MCF 10A (cell line): ENCODE measurements at regions of chr12 and their contacts with region 1.

Region 1: DNA sequence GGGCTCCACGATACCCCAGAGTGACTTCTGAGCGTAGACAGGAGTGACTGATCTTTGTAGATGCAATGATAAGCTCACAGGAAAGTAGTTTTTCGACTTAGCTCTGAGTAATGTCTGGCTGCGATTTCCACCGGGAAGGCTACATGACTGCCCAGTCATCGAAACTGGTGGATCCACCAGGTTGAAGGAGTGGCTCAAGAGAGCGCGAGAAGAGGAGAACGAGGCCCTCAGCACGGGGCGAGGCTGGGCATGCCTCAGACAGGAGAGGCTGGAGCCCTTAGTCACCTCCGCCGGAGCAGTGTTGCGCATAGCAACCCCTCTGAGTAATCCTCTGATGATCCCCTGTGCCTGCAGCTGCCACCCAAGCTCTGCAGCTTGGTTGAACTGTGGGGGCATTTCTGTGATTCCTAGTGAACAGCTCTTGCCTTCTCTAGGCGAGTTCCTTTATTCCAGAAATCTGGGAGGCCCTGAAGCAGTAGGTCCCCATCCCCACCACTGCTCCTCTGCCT is 25.6 kb downstream of the ELK3 start:
- DNase-seq: peak; percentile 99
- H3K4me3 Mint-ChIP-seq: peak overlapping the region; percentile 76
- H3K27ac Mint-ChIP-seq: peak overlapping the region; percentile 100
- H3K4me1 Mint-ChIP-seq: peaks cover 51% of the 10 kb centered on the region
- H3K27me3 Mint-ChIP-seq: no peaks in the 10 kb centered on the region
- CTCF ChIP-seq: no peak

Region 2: DNA sequence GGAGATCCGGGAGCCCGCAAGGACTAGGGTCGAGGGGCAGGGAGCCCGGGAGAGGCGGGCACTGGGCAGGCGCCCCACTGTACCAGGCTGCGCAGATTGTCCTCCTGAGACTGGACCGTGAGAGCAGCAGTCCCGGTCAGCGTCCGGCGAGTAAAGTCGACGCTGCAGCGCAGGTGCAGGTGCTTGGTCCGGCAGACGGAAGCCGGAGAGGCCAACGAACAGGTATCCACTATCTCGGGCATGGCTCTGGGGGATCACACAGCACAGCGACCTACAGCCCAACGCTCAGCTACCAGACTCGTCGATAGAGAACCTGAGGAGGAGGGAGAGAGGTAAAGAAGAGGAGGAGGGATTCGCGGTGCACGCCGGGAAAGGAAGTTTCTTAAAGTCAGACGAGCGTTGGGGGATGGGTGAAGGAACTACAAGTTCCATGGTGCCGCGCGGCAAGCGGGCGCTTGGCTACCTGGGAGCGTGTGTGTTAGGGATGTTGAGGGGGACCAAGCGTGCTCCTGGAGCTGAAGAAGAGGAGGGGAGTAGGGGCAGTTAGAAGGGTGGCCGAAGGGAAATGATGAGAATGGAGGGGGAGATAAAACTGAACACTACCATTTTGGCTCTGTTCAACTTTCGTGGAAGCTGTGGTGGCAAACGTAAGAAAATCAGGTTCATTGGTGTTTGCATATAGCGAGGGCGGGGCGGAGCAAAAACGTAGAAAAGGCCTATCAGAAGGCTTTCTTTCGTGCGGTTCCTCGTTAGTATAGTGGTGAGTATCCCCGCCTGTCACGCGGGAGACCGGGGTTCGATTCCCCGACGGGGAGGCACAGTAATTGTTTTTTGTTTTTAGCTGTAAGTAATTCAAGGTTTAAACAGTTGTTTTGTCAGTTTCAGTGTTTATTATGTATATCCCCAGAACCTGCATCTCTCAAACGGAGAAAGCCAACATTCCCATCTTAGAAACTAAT is 184.2 kb before region 1 on chr12 and contains the start of gene LTA4H:
- CTCF ChIA-PET with region 1: interaction called, 5 read pairs
- POLR2A ChIA-PET with region 1: interaction called, 15 read pairs
- intact Hi-C with region 1: no loop called
- DNase-seq: peak; percentile 99
- H3K4me3 Mint-ChIP-seq: no peak within 1 kb of the TSS
- H3K27ac Mint-ChIP-seq: no peak within 1 kb of the TSS
- H3K4me1 Mint-ChIP-seq: peaks cover 8% of the 10 kb centered on the region
- H3K27me3 Mint-ChIP-seq: no peaks in the 10 kb centered on the region
- CTCF ChIP-seq: no peak
- total RNA-seq, gene LTA4H: 52.3 and 66.0 TPM in 2 replicates

Region 3: GRCh38 chr12:96073346-96074330 is 146.1 kb before region 1 on chr12:
- CTCF ChIA-PET with region 1: interaction called, 11 read pairs
- POLR2A ChIA-PET with region 1: interaction called, 5 read pairs
- intact Hi-C with region 1: no loop called
- DNase-seq: peak; percentile 46
- H3K4me3 Mint-ChIP-seq: no peak overlapping the region
- H3K27ac Mint-ChIP-seq: peak overlapping the region; percentile 13
- H3K4me1 Mint-ChIP-seq: peaks cover 12% of the 10 kb centered on the region
- H3K27me3 Mint-ChIP-seq: no peaks in the 10 kb centered on the region
- CTCF ChIP-seq: no peak

Region 4: GRCh38 chr12:96208801-96209549 is 10.8 kb before region 1 on chr12:
- CTCF ChIA-PET with region 1: interaction called, 12 read pairs
- POLR2A ChIA-PET with region 1: interaction called, 27 read pairs
- intact Hi-C with region 1: no loop called
- DNase-seq: no peak
- H3K4me3 Mint-ChIP-seq: no peak overlapping the region
- H3K27ac Mint-ChIP-seq: peak overlapping the region; percentile 78
- H3K4me1 Mint-ChIP-seq: peaks cover 42% of the 10 kb centered on the region
- H3K27me3 Mint-ChIP-seq: no peaks in the 10 kb centered on the region
- CTCF ChIP-seq: peak; percentile 14

Region 5: GRCh38 chr12:96335270-96335669 is 115.5 kb after region 1 on chr12:
- CTCF ChIA-PET with region 1: interaction called, 11 read pairs
- POLR2A ChIA-PET with region 1: no interaction called
- intact Hi-C with region 1: no loop called
- DNase-seq: no peak
- H3K4me3 Mint-ChIP-seq: no peak overlapping the region
- H3K27ac Mint-ChIP-seq: no peak overlapping the region
- H3K4me1 Mint-ChIP-seq: no peaks in the 10 kb centered on the region
- H3K27me3 Mint-ChIP-seq: no peaks in the 10 kb centered on the region
- CTCF ChIP-seq: no peak

Region 6: DNA sequence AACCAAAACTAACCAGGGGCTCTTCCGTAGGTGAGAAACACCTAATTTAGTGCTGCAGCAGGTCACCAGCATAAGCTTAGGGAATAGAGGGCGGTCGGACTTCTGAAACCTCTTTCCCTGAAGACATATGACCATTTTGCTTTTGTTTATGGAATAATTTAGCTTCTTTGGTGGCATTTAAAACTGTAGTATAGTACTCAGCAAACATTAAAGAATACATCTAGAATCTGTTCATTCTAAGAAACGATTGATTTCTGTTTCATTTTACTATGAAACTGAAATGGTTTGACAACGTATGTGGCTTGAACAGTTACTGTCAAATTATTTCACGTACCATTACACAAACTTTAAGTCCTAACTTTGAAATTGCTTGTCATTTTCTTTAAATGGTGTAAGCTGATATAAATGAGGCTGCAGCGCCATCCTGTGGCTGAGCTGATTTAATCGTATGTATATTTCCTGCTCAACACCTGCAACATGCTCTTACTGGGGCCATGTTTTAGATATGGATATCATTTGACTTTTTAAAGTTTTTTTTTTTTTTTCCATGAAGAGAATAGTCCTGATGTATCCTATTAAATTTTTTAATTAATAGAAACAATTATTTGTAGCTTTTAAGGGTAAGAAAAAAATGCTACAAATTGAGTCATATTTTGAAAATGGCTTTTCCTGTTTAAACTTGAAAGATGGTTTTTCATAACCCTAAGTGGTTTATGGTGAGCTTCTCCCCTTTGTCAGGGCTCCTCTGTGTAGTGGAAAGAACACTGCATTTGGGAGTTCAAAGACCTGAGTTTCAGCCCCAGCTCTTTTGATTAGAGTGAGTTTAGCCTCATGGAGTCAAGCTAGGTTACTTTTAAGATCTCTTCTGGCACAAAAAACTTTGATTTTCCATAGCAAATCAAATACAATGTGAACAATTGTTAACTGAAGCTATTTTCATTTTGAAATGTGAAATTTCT is 297.0 kb after region 1 on chr12:
- CTCF ChIA-PET with region 1: interaction called, 78 read pairs
- POLR2A ChIA-PET with region 1: interaction called, 3 read pairs
- intact Hi-C with region 1: loop called (anchors 5 kb)
- DNase-seq: peak; percentile 78
- H3K4me3 Mint-ChIP-seq: no peak overlapping the region
- H3K27ac Mint-ChIP-seq: no peak overlapping the region
- H3K4me1 Mint-ChIP-seq: peaks cover 8% of the 10 kb centered on the region
- H3K27me3 Mint-ChIP-seq: no peaks in the 10 kb centered on the region
- CTCF ChIP-seq: peak; percentile 63